ENCODE measurements at regions of chr1 and their contacts with region 1.

Region 1: GRCh38 chr1:58546520-58547308 is at the start of gene OMA1:
- DNase-seq: peak; percentile 97 to 99 (median 98)
- ATAC-seq: peak; percentile 97
- H3K4me3 ChIP-seq: peak within 1 kb of the TSS; percentile 86
- H3K27ac ChIP-seq: peak within 1 kb of the TSS; percentile 88
- H3K4me1 ChIP-seq: peaks cover 13 to 33% of the 10 kb centered on the region in 2 experiments; a peak in 4 of 5 replicates
- H3K27me3 ChIP-seq: no peaks in the 10 kb centered on the region
- CTCF ChIP-seq: peak; percentile 93 to 97 (median 94)
- EP300 ChIP-seq: no peak
- POLR2A ChIP-seq: peak; percentile 89
- RAD21 ChIP-seq: peak; percentile 92 to 93
- polyA plus RNA-seq, gene OMA1: 43.1 to 51.5 TPM

Region 2: DNA sequence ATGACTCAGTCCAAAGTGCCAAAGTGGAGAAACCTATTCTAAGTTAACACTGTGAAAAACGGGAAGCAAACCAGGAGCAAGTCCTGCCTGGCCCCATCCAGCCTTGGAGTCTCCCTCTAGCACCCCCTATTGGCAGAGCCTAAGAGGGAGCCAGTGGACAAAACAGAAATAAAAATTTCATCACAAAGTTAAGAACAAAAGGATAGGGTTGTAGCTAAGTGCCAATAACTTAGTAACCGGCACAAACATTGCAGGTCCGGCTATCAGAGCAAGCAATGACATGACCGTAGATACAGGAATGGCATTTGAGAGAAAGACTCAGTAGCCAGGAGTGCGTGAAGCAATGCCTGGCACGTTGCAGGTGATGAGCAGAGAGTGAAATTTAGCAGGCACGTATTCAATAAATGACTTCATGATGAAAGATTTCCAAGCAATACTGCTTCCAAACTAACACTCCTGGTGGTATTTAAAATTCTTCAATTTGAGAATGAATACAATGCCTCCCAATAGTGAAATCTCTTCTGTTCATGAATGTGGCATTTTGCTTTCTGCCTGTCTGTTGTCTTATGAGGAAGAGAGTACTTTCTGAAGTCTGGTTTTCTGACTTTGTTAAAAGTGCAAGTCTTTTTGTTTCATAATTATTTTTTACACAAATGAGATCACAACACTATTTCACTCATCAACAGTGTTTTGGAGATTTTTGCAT is 391.1 kb before region 1 on chr1:
- CTCF ChIA-PET with region 1: no interaction called
- POLR2A ChIA-PET with region 1: no interaction called
- in situ Hi-C with region 1: no loop called
- intact Hi-C with region 1: loop called (anchors 5 kb)
- DNase-seq: peak; percentile 22 to 57 (median 26)
- ATAC-seq: peak; percentile 89
- H3K4me3 ChIP-seq: no peak overlapping the region
- H3K27ac ChIP-seq: no peak overlapping the region
- H3K4me1 ChIP-seq: no peaks in the 10 kb centered on the region
- H3K27me3 ChIP-seq: no peaks in the 10 kb centered on the region
- CTCF ChIP-seq: peak; percentile 66 to 79 (median 77)
- EP300 ChIP-seq: no peak
- POLR2A ChIP-seq: no peak
- RAD21 ChIP-seq: peak in 1 of 2 experiments; percentile 34; a peak in 1 of 4 replicates

Region 3: GRCh38 chr1:58249737-58250586 is 296.8 kb before region 1 on chr1:
- CTCF ChIA-PET with region 1: no interaction called
- POLR2A ChIA-PET with region 1: no interaction called
- in situ Hi-C with region 1: no loop called
- intact Hi-C with region 1: loop called (anchors 5 kb)
- DNase-seq: peak in 2 of 4 experiments; percentile 9 to 12
- ATAC-seq: peak; percentile 83
- H3K4me3 ChIP-seq: no peak overlapping the region
- H3K27ac ChIP-seq: no peak overlapping the region
- H3K4me1 ChIP-seq: peaks cover 0 to 4% of the 10 kb centered on the region in 2 experiments; a peak in 1 of 5 replicates
- H3K27me3 ChIP-seq: peaks cover 4 to 23% of the 10 kb centered on the region in 2 experiments; a peak in 3 of 5 replicates
- CTCF ChIP-seq: no peak
- EP300 ChIP-seq: no peak
- POLR2A ChIP-seq: no peak
- RAD21 ChIP-seq: no peak

Region 4: GRCh38 chr1:58515794-58516401 is 30.8 kb before region 1 on chr1:
- CTCF ChIA-PET with region 1: interaction called, 7 read pairs
- POLR2A ChIA-PET with region 1: interaction called, 4 read pairs
- in situ Hi-C with region 1: no loop called
- intact Hi-C with region 1: loop called (anchors 1 kb)
- DNase-seq: peak; percentile 60 to 80 (median 60)
- ATAC-seq: peak; percentile 76
- H3K4me3 ChIP-seq: no peak overlapping the region
- H3K27ac ChIP-seq: no peak overlapping the region
- H3K4me1 ChIP-seq: no peaks in the 10 kb centered on the region
- H3K27me3 ChIP-seq: no peaks in the 10 kb centered on the region
- CTCF ChIP-seq: peak; percentile 56 to 77 (median 57)
- EP300 ChIP-seq: no peak
- POLR2A ChIP-seq: no peak
- RAD21 ChIP-seq: peak; percentile 83 to 87

Region 5: GRCh38 chr1:58652651-58653184 is 106.0 kb after region 1 on chr1:
- CTCF ChIA-PET with region 1: interaction called, 3 read pairs
- POLR2A ChIA-PET with region 1: interaction called, 3 read pairs
- in situ Hi-C with region 1: no loop called
- intact Hi-C with region 1: loop called (anchors 1 kb)
- DNase-seq: peak; percentile 64 to 80 (median 74)
- ATAC-seq: peak; percentile 96
- H3K4me3 ChIP-seq: no peak overlapping the region
- H3K27ac ChIP-seq: no peak overlapping the region
- H3K4me1 ChIP-seq: peaks cover 0 to 6% of the 10 kb centered on the region in 2 experiments; a peak in 2 of 5 replicates
- H3K27me3 ChIP-seq: no peaks in the 10 kb centered on the region
- CTCF ChIP-seq: peak; percentile 76 to 89 (median 76)
- EP300 ChIP-seq: no peak
- POLR2A ChIP-seq: no peak; the same call in 1 of the 2 replicates
- RAD21 ChIP-seq: peak; percentile 81 to 85

Measured in K562 (cell line).